IMR-90 (cell line): ENCODE measurements at regions of chr4 and their contacts with region 1.

Region 1: DNA sequence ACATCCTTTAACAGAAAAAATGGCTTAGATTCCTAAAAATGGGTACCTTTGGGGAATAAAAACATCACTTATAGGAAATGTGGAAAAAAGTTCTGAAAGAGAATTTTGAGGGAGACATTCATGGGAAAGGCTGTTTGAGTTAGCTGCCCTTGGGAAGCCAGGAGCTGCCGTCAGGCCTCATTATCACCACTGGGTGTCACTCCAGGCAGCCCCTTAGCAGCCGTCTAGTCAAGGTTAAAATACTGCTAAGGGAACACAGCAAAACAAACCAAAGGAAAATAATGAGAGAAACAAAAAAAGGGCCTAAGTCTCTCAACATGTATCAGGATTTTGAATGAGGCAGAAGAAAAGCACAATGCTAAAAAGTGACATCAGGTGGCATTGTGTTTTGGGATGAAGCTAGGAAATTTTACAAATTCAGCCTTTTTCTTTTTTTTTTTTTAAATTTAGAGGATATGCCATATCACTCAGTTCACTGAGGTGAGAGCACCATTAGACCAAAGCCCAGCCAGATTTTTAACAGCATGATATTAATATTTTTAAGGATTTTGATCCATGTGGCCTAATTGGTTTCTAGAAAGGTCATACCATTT is 235.3 kb downstream of the GPAT3 start:
- DNase-seq: peak; percentile 60
- ATAC-seq: peak; percentile 94
- H3K4me3 ChIP-seq: no peak overlapping the region
- H3K27ac ChIP-seq: no peak overlapping the region
- H3K4me1 ChIP-seq: no peaks in the 10 kb centered on the region
- H3K27me3 ChIP-seq: peaks cover 4% of the 10 kb centered on the region; the same call in 1 of the 2 replicates
- CTCF ChIP-seq: peak; percentile 88
- POLR2A ChIP-seq: no peak
- RAD21 ChIP-seq: peak; percentile 96

Region 2: DNA sequence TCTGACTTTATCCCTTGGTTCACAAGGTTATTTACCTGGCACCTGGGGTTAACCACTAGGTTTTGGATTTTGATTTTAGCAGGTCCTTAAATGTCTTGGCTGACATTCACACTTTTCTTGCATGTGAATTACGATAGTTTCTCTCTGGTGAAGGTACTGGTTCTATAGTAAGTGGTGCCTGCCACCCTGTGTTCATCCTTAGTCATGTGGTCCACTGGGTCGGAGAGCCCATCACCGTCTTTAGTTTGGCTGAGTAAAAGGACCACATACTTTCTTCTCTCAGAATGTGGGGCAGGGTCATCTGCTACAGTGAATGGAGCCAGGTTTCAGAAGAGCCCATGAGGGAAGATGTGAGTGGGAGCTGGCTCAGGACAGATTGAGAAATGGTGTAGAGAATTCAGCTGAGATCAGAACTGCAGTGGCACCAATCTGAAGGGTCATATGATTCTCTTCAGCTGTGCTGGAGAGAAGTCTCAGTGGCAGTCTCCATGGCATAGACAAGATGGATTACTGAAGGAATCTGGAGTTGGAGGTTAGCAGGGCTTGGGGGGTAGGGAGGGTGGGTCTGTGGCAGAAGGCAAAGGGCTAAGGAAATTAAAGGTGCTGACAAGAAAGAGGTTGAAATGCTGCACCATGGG is 75.1 kb after region 1 on chr4:
- CTCF ChIA-PET with region 1: no interaction called
- POLR2A ChIA-PET with region 1: no interaction called
- dilution Hi-C with region 1: no loop called
- in situ Hi-C with region 1: no loop called
- intact Hi-C with region 1: no loop called
- DNase-seq: no peak
- ATAC-seq: no peak
- H3K4me3 ChIP-seq: no peak overlapping the region
- H3K27ac ChIP-seq: no peak overlapping the region
- H3K4me1 ChIP-seq: peaks cover 7% of the 10 kb centered on the region
- H3K27me3 ChIP-seq: no peaks in the 10 kb centered on the region
- CTCF ChIP-seq: no peak
- POLR2A ChIP-seq: no peak
- RAD21 ChIP-seq: no peak

Region 3: DNA sequence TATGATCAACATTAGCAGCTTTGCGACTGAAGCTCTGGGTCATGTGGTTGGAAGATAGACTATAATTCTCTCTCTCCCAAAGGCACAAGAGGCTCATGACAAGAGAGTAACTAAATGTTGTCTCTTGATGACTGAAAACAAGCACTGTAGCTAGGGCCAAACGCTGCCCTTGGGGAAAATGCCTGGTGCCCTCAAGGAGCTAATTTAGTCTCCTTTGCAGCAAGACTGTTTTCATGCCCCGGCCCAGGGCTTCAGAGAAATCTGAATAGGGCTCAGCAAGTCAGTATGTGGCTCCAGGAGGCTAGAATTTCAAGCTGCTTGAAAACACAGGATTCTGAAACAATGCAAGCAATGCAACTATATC is 176.6 kb after region 1 on chr4:
- CTCF ChIA-PET with region 1: interaction called, 4 read pairs
- POLR2A ChIA-PET with region 1: no interaction called
- dilution Hi-C with region 1: no loop called
- in situ Hi-C with region 1: no loop called
- intact Hi-C with region 1: loop called (anchors 5 kb)
- DNase-seq: peak; percentile 1
- ATAC-seq: peak; percentile 11; the same call in 1 of the 2 replicates
- H3K4me3 ChIP-seq: no peak overlapping the region
- H3K27ac ChIP-seq: no peak overlapping the region
- H3K4me1 ChIP-seq: no peaks in the 10 kb centered on the region
- H3K27me3 ChIP-seq: no peaks in the 10 kb centered on the region; the same call in 1 of the 2 replicates
- CTCF ChIP-seq: no peak
- POLR2A ChIP-seq: no peak
- RAD21 ChIP-seq: no peak

Region 4: DNA sequence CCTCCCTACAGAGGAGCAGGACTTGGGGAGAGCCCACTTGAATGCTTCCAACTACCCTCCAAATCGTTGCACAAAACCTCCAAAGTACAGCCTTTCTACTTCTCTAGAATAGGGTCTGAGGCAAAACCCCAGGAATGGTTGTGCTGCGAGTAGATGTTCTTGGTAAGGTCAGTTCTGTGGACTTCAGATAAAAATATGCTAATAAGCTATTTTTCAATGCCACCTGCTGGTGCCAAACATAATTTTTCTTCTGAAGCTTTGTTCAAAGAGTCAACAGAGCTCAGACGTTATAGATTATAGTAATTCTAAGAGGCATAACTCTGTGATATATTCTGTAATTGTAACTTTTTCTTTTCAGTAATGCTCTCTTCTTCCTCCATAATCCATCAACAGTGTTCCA is 190.4 kb after region 1 on chr4:
- CTCF ChIA-PET with region 1: interaction called, 15 read pairs
- POLR2A ChIA-PET with region 1: no interaction called
- dilution Hi-C with region 1: no loop called
- in situ Hi-C with region 1: loop called (anchors 5 kb)
- intact Hi-C with region 1: loop called (anchors 1 kb)
- DNase-seq: peak; percentile 23
- ATAC-seq: peak; percentile 37
- H3K4me3 ChIP-seq: no peak overlapping the region
- H3K27ac ChIP-seq: no peak overlapping the region
- H3K4me1 ChIP-seq: no peaks in the 10 kb centered on the region
- H3K27me3 ChIP-seq: 0 out of 2 replicates have a peak, but pooled peaks cover 2% of the 10 kb centered on the region
- CTCF ChIP-seq: peak; percentile 41
- POLR2A ChIP-seq: no peak
- RAD21 ChIP-seq: peak; percentile 55

Region 5: DNA sequence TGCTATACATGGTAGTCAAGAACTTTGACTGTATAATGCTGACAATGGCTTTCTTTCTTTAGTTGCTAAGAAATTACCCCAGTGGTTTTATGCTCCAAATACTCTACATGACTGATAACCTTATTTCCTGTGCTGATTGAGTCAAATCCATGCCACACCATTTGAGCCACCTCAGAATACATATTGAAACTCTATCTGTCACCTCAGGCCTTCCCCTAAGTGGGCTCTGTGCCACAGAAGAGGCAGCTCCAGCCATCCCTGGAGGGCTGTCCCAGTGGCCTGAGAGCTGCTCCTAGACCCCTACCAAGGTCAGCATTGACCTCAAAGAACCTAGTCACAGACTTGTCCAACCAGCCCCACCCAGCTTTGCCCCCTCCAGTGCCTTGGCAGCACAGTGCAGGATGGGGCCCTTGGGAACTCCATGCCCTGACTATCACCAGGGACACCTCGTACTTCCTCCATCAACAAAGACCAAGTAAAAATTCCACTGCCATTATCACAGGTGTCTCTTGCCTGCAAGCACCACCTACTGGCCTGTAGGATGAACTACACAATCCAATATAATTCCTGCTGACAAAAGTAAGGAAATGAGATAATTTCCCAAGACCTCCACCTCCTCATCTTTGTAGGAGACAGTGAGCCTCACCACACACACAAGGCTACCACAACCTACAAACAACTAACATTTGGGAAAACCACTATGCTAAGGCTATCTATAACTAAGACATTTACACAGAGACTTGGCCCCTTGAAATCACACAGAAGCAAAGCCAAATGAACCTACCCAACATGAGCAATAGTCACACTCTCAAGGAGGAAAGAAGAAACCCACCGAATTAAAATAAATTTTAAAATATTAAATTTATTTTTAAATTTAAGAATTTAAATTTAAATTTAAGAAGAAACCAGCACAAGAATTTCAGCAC is 488.0 kb after region 1 on chr4:
- CTCF ChIA-PET with region 1: interaction called, 4 read pairs
- POLR2A ChIA-PET with region 1: no interaction called
- dilution Hi-C with region 1: no loop called
- in situ Hi-C with region 1: loop called (anchors 10 kb)
- intact Hi-C with region 1: loop called (anchors 1 kb)
- DNase-seq: peak; percentile 32
- ATAC-seq: peak; percentile 62; the same call in 1 of the 2 replicates
- H3K4me3 ChIP-seq: no peak overlapping the region
- H3K27ac ChIP-seq: no peak overlapping the region
- H3K4me1 ChIP-seq: no peaks in the 10 kb centered on the region
- H3K27me3 ChIP-seq: no peaks in the 10 kb centered on the region
- CTCF ChIP-seq: peak; percentile 74
- POLR2A ChIP-seq: no peak
- RAD21 ChIP-seq: peak; percentile 68

Region 6: DNA sequence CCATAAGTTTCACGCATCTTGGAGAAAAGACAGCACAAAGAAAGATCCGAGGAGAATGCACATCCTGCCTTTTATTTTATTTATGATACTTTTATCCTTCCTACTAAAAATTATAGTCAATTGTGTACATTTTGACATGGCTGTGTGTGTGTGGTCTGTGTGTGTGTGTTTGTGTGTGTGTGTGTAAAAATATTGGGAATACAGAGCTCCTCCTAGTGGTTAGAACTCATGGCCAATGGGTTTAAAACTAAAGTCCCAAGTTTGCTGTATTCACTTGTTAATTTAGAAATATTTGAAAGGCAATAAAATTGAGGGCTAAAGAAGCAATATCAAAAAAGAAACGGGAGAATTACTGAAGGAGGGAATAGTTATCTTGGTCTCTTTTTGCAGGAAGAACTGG is 680.3 kb after region 1 on chr4:
- CTCF ChIA-PET with region 1: no interaction called
- POLR2A ChIA-PET with region 1: no interaction called
- dilution Hi-C with region 1: no loop called
- in situ Hi-C with region 1: no loop called
- intact Hi-C with region 1: loop called (anchors 5 kb)
- DNase-seq: no peak
- ATAC-seq: no peak
- H3K4me3 ChIP-seq: no peak overlapping the region
- H3K27ac ChIP-seq: no peak overlapping the region
- H3K4me1 ChIP-seq: no peaks in the 10 kb centered on the region
- H3K27me3 ChIP-seq: no peaks in the 10 kb centered on the region
- CTCF ChIP-seq: peak; percentile 30; the same call in 1 of the 2 replicates
- POLR2A ChIP-seq: no peak
- RAD21 ChIP-seq: no peak

Region 7: GRCh38 chr4:84503495-84504437 is 732.6 kb after region 1 on chr4:
- CTCF ChIA-PET with region 1: no interaction called
- POLR2A ChIA-PET with region 1: no interaction called
- dilution Hi-C with region 1: no loop called
- in situ Hi-C with region 1: loop called (anchors 10 kb)
- intact Hi-C with region 1: loop called (anchors 1 kb)
- DNase-seq: peak; percentile 66
- ATAC-seq: peak; percentile 89
- H3K4me3 ChIP-seq: no peak overlapping the region
- H3K27ac ChIP-seq: no peak overlapping the region
- H3K4me1 ChIP-seq: no peaks in the 10 kb centered on the region
- H3K27me3 ChIP-seq: peaks cover 52% of the 10 kb centered on the region
- CTCF ChIP-seq: peak; percentile 72
- POLR2A ChIP-seq: no peak
- RAD21 ChIP-seq: peak; percentile 75